Lower lobe of right lung (tissue), 2 donors: ENCODE measurements at regions of chr2 and their contacts with region 1.

Region 1: GRCh38 chr2:182650704-182651103 is 65.4 kb upstream of the DNAJC10 start:
- DNase-seq: no peak
- ATAC-seq: peak; percentile 37 to 41
- H3K4me3 ChIP-seq: no peak overlapping the region
- H3K27ac ChIP-seq: no peak overlapping the region
- H3K4me1 ChIP-seq: no peaks in the 10 kb centered on the region
- H3K27me3 ChIP-seq: no peaks in the 10 kb centered on the region
- CTCF ChIP-seq: peak; percentile 50

Region 2: DNA sequence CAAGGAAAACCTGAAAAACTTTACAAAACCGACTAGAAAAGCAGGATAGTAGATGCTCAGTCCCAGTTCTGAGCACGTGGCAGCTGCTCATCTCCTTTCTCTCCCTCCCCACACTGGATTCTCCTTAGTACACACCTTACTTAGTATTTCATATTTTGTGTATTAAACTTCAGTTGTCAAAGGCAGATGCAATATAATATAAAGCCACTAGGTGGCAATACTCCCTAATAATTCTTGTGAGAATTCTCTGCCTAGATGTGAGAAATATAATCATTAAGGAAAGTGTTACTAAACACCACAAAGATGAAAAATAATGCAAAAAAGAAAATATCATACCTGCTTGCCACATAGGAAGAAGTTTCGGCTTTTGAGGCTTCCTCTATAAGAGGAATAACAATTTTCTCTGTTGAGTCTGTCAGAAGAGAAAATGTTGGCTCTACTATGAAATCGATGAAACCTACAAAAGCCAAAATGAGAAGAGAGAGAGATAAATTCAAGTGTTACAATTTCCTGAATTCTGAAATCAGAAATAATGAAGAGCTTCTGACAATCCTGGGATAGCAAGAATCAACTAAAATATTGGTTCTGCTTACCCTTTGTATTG is 464.5 kb before region 1 on chr2:
- intact Hi-C with region 1: loop called (anchors 5 kb)
- DNase-seq: no peak
- ATAC-seq: peak; percentile 38 to 52
- H3K4me3 ChIP-seq: no peak overlapping the region
- H3K27ac ChIP-seq: no peak overlapping the region
- H3K4me1 ChIP-seq: no peaks in the 10 kb centered on the region
- H3K27me3 ChIP-seq: no peaks in the 10 kb centered on the region
- CTCF ChIP-seq: peak; percentile 84